A549 (cell line): ENCODE measurements at regions of chr7 and their contacts with region 1.

Region 1: DNA sequence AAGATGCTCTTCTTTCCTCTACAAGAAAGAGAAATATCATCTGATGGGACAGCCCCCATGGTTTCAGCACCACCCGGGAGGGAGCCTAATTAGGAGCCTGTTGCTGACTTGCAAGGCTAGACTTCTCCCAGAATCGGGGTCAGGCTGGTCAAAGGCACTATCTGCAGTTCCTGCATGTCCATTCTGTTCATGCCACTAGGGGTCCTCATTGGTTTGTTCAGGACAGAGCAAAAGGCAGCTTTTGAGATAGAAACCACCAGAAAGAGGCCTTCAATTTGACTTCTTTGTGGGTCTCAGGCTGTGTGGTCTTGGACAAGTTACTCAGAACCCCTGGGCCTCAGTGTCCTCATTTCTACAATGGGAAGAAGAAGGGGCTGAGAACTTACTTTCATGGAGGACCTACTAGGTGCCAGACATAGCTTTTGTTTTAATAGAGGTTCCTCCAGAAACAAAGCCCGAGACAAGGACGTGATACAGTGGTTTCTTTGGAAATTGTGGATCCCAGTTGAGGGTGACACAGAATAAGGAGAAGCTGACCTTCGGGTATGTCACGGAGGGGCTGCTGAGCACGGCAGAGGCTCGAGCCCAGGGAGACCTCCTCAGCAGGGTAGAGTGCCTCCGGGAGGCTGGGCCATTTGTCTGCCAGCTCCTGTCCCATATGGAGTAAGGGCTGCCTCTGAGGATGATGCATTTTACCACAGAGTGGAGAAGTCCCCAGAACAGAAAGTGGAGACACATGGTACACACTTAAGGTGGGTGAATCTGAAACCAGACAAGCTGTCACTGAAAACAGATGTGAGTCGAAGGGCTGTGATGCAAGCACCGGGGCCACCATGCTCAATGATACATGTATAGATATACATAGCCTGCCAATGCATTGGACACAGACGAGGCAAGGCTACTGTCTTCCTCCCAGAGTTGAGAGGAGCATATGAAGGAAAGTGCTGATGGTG is 33.1 kb upstream of the NEUROD6 start:
- DNase-seq: peak; percentile 76 to 78
- ATAC-seq: peak; percentile 98 to 99
- H3K4me3 ChIP-seq: no peak overlapping the region
- H3K27ac ChIP-seq: peak overlapping the region in 1 of 2 experiments; percentile 19; a peak in 3 of 6 replicates
- H3K4me1 ChIP-seq: no peaks in the 10 kb centered on the region
- CTCF ChIP-seq: peak; percentile 91
- EP300 ChIP-seq: no peak
- POLR2A ChIP-seq: no peak
- RAD21 ChIP-seq: peak; percentile 94 to 95

Region 2: GRCh38 chr7:31362401-31362800 is 11.2 kb before region 1 on chr7:
- CTCF ChIA-PET with region 1: interaction called, 25 read pairs
- POLR2A ChIA-PET with region 1: no interaction called
- DNase-seq: no peak
- ATAC-seq: no peak
- H3K4me3 ChIP-seq: no peak overlapping the region
- H3K27ac ChIP-seq: no peak overlapping the region
- H3K4me1 ChIP-seq: peaks cover 7% of the 10 kb centered on the region; the same call in 1 of the 3 replicates
- CTCF ChIP-seq: no peak
- EP300 ChIP-seq: no peak
- POLR2A ChIP-seq: no peak
- RAD21 ChIP-seq: no peak

Region 3: GRCh38 chr7:31419505-31420055 is 46.0 kb after region 1 on chr7:
- CTCF ChIA-PET with region 1: interaction called, 21 read pairs
- POLR2A ChIA-PET with region 1: no interaction called
- DNase-seq: no peak
- ATAC-seq: no peak
- H3K4me3 ChIP-seq: no peak overlapping the region
- H3K27ac ChIP-seq: no peak overlapping the region
- H3K4me1 ChIP-seq: no peaks in the 10 kb centered on the region
- CTCF ChIP-seq: no peak
- EP300 ChIP-seq: no peak
- POLR2A ChIP-seq: no peak
- RAD21 ChIP-seq: no peak

Region 4: GRCh38 chr7:31448649-31449048 is 75.0 kb after region 1 on chr7:
- CTCF ChIA-PET with region 1: interaction called, 83 read pairs
- POLR2A ChIA-PET with region 1: no interaction called
- DNase-seq: no peak
- ATAC-seq: no peak
- H3K4me3 ChIP-seq: no peak overlapping the region
- H3K27ac ChIP-seq: no peak overlapping the region
- H3K4me1 ChIP-seq: no peaks in the 10 kb centered on the region
- CTCF ChIP-seq: no peak
- EP300 ChIP-seq: no peak
- POLR2A ChIP-seq: no peak
- RAD21 ChIP-seq: no peak

Region 5: GRCh38 chr7:31633894-31634494 is 260.4 kb after region 1 on chr7:
- CTCF ChIA-PET with region 1: interaction called, 113 read pairs
- POLR2A ChIA-PET with region 1: no interaction called
- DNase-seq: peak; percentile 47 to 69
- ATAC-seq: peak; percentile 96
- H3K4me3 ChIP-seq: no peak overlapping the region
- H3K27ac ChIP-seq: no peak overlapping the region
- H3K4me1 ChIP-seq: no peaks in the 10 kb centered on the region
- CTCF ChIP-seq: peak; percentile 76
- EP300 ChIP-seq: no peak
- POLR2A ChIP-seq: no peak
- RAD21 ChIP-seq: peak; percentile 87 to 92

Region 6: GRCh38 chr7:31648880-31649279 is 275.3 kb after region 1 on chr7:
- CTCF ChIA-PET with region 1: no interaction called
- POLR2A ChIA-PET with region 1: no interaction called
- DNase-seq: no peak
- ATAC-seq: no peak
- H3K4me3 ChIP-seq: no peak overlapping the region
- H3K27ac ChIP-seq: no peak overlapping the region
- H3K4me1 ChIP-seq: no peaks in the 10 kb centered on the region
- CTCF ChIP-seq: no peak
- EP300 ChIP-seq: no peak
- POLR2A ChIP-seq: no peak
- RAD21 ChIP-seq: no peak